ENCODE measurements at regions of chr6 and their contacts with region 1.

Region 1: DNA sequence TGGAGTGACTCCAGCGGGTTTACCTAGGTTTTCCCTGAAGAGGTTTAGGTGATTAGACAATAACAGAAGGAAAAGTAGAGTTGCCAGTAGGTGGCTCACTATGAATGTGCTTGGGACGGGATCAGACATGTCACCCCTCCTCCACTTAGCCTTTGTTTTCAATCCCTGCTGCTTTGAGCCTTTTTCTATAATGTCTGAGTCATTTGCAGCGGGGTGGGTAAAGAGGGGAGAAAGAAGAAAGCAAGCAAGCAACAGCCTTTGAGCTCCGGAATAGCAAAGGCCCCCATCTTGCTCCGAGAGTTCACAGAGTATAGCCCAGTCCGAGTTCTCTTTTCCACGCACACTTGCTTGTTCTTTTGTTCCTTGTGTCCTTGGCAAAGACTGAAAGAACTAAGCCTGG is 129.1 kb downstream of the PACRG start:
- DNase-seq: peak; percentile 86
- H3K4me3 Mint-ChIP-seq: peak overlapping the region; percentile 66
- H3K27ac Mint-ChIP-seq: peak overlapping the region; percentile 81
- H3K4me1 Mint-ChIP-seq: peaks cover 9% of the 10 kb centered on the region
- H3K27me3 Mint-ChIP-seq: no peaks in the 10 kb centered on the region
- CTCF ChIP-seq: peak; percentile 59

Region 2: DNA sequence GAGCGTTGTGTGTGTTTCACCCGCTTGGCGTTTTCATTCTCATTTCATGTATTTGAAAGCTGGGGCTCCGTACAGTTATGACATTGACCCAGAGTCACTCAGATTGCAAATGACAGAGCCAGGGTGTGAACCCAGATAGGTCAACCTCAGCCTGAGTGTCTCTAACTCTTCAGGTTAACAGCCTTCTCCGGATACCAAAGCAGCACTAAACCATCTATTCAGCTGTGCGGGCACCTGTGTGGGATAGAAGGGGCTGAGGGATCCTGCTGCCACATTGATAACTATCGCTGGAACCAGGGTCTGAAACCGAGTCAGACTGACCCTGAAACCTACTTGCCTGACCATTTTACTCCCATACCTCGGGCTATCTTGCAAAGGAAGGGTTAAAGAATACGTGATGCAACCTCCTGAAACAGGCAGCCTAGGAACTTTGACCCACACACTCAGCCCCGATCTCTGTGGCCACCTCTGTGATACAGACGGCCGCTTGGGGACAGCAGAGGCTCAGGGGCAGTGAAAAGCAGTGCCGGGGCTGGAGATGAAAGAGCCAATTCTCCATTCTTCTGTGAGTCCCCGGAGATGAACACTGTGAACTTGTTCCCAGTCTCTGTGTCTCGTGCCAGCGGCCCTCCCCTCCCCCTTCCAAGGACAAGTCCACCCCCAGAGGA is 324.1 kb after region 1 on chr6:
- CTCF ChIA-PET with region 1: interaction called, 3 read pairs
- POLR2A ChIA-PET with region 1: no interaction called
- intact Hi-C with region 1: loop called (anchors 5 kb)
- DNase-seq: peak; percentile 73
- H3K4me3 Mint-ChIP-seq: no peak overlapping the region
- H3K27ac Mint-ChIP-seq: peak overlapping the region; percentile 65
- H3K4me1 Mint-ChIP-seq: no peaks in the 10 kb centered on the region
- H3K27me3 Mint-ChIP-seq: no peaks in the 10 kb centered on the region
- CTCF ChIP-seq: peak; percentile 44